CD4-positive, alpha-beta memory T cell (primary cell): ENCODE measurements at regions of chr4 and their contacts with region 1.

Region 1: GRCh38 chr4:147866532-147867271 is 134.8 kb downstream of the ARHGAP10 start:
- DNase-seq: peak; percentile 83 to 89 (median 85)
- H3K4me3 ChIP-seq: no peak overlapping the region
- H3K4me3 Mint-ChIP-seq: no peak overlapping the region
- H3K27ac ChIP-seq: no peak overlapping the region
- H3K27ac Mint-ChIP-seq: peak overlapping the region in 1 of 7 donors; percentile 43
- H3K4me1 ChIP-seq: no peaks in the 10 kb centered on the region
- H3K4me1 Mint-ChIP-seq: peaks cover 0 to 2% (median 0%) of the 10 kb centered on the region in 4 donors
- H3K27me3 ChIP-seq: no peaks in the 10 kb centered on the region
- H3K27me3 Mint-ChIP-seq: no peaks in the 10 kb centered on the region

Region 2: GRCh38 chr4:147160908-147161513 is 705.7 kb before region 1 on chr4:
- CTCF ChIA-PET with region 1: interaction called, 7 read pairs
- POLR2A ChIA-PET with region 1: no interaction called
- intact Hi-C with region 1: loop called (anchors 2 kb)
- DNase-seq: peak in 2 of 5 donors; percentile 3 to 8
- H3K4me3 ChIP-seq: no peak overlapping the region
- H3K4me3 Mint-ChIP-seq: no peak overlapping the region
- H3K27ac ChIP-seq: no peak overlapping the region
- H3K27ac Mint-ChIP-seq: no peak overlapping the region
- H3K4me1 ChIP-seq: no peaks in the 10 kb centered on the region
- H3K4me1 Mint-ChIP-seq: peaks cover 0 to 4% (median under 1%) of the 10 kb centered on the region in 4 donors
- H3K27me3 ChIP-seq: no peaks in the 10 kb centered on the region
- H3K27me3 Mint-ChIP-seq: peaks cover 12 to 16% of the 10 kb centered on the region in 2 donors

Region 3: DNA sequence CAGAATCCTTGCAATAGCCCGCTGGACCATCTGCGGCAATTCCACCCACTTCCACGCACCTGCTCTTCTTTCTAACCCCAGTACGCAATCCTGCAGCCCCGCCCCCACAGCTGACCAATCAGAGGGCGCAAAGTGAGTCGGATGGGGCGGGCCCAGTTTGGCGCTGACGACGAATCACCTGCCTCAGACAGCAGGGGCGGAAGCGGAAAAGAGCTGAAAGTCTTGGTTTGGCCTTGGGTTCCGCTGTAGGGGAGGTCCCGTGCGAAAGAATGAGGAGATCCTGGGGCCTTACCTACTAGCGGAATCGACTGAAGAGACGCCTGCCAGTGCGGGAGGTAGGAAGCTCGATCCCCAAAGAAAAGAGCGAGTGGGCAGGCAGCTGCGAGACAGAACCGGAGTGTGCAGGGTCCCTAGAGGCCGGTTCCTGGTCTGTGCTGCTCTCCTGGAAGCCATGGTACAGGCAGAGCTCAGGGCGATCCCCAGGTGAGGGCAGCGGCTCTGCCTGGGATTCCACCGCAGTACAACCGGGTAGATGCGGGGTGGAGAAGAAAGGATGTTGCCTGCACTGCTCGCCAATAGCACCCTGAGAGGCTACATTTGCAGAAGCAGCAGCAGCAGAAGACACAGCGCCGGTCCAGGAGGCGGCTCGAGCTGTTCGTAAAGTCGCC is 249.4 kb before region 1 on chr4 and contains the start of gene TMEM184C:
- CTCF ChIA-PET with region 1: interaction called, 20 read pairs
- POLR2A ChIA-PET with region 1: interaction called, 3 read pairs
- intact Hi-C with region 1: no loop called
- DNase-seq: peak; percentile 97 to 98 (median 98)
- H3K4me3 ChIP-seq: peak within 1 kb of the TSS; percentile 82 to 99
- H3K4me3 Mint-ChIP-seq: peak within 1 kb of the TSS; percentile 92 to 98 (median 96)
- H3K27ac ChIP-seq: peak within 1 kb of the TSS; percentile 93
- H3K27ac Mint-ChIP-seq: peak within 1 kb of the TSS; percentile 96 to 99 (median 97)
- H3K4me1 ChIP-seq: peaks cover 49% of the 10 kb centered on the region
- H3K4me1 Mint-ChIP-seq: peaks cover 22 to 51% (median 36%) of the 10 kb centered on the region in 4 donors
- H3K27me3 ChIP-seq: no peaks in the 10 kb centered on the region
- H3K27me3 Mint-ChIP-seq: peaks cover 0 to 1% of the 10 kb centered on the region in 2 donors
- total RNA-seq, gene TMEM184C: 28.8 to 31.5 TPM

Region 4: DNA sequence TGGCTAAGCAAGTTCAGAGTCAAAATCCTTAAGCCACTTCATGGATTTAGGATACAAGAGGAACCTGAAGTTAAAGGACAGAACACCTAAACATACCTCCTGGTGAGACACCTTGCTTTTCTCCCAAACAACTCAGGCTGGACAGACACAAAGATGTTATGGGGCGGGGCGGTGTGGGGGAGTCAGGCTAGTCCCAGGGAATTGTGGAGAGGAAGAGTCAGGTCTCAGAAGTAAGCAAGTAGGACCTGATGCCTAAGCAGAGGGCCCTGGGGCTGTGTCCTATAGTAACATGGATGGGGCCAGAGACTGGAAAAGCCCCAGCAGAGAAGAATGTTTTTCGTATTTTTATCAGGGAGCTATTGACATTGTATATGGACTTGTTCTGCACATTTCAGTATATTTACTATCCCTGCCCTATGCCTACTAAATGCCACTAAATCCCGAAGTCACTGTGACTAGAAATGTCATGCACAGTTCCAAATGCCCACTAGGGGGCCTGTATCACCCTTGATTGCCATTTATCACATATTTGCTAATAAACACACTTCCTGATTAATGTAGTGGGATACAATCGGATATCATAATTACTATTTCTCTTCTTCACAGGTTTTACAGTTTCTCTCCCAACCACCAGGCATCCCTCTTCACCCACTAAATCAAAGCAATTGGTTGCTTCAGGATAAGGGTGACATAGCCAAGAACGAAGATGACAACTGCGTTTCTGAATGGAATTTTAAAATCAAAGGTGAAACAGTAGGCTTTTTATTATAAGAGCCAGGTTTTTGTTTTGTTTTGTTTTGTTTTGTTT is 158.6 kb before region 1 on chr4:
- CTCF ChIA-PET with region 1: interaction called, 261 read pairs
- POLR2A ChIA-PET with region 1: interaction called, 4 read pairs
- intact Hi-C with region 1: loop called (anchors 1 kb)
- DNase-seq: peak; percentile 51 to 62 (median 55)
- H3K4me3 ChIP-seq: no peak overlapping the region
- H3K4me3 Mint-ChIP-seq: no peak overlapping the region
- H3K27ac ChIP-seq: no peak overlapping the region
- H3K27ac Mint-ChIP-seq: peak overlapping the region in 1 of 7 donors; percentile 7
- H3K4me1 ChIP-seq: no peaks in the 10 kb centered on the region
- H3K4me1 Mint-ChIP-seq: peaks cover 0 to 3% (median under 1%) of the 10 kb centered on the region in 4 donors
- H3K27me3 ChIP-seq: no peaks in the 10 kb centered on the region
- H3K27me3 Mint-ChIP-seq: no peaks in the 10 kb centered on the region

Region 5: GRCh38 chr4:147731580-147732517 is 134.9 kb before region 1 on chr4 and contains the start of gene ARHGAP10:
- CTCF ChIA-PET with region 1: interaction called, 48 read pairs
- POLR2A ChIA-PET with region 1: interaction called, 13 read pairs
- intact Hi-C with region 1: loop called (anchors 1 kb)
- DNase-seq: peak; percentile 57 to 79 (median 65)
- H3K4me3 ChIP-seq: peak within 1 kb of the TSS; percentile 76 to 84
- H3K4me3 Mint-ChIP-seq: peak within 1 kb of the TSS; percentile 90 to 97 (median 93)
- H3K27ac ChIP-seq: peak within 1 kb of the TSS; percentile 57
- H3K27ac Mint-ChIP-seq: peak within 1 kb of the TSS; percentile 91 to 97 (median 94)
- H3K4me1 ChIP-seq: peaks cover 26% of the 10 kb centered on the region
- H3K4me1 Mint-ChIP-seq: peaks cover 30 to 47% (median 42%) of the 10 kb centered on the region in 4 donors
- H3K27me3 ChIP-seq: no peaks in the 10 kb centered on the region
- H3K27me3 Mint-ChIP-seq: no peaks in the 10 kb centered on the region
- total RNA-seq, gene ARHGAP10: 8.2 to 8.3 TPM

Region 6: GRCh38 chr4:147822128-147822527 is 44.6 kb before region 1 on chr4:
- CTCF ChIA-PET with region 1: interaction called, 13 read pairs
- POLR2A ChIA-PET with region 1: no interaction called
- intact Hi-C with region 1: no loop called
- DNase-seq: no peak
- H3K4me3 ChIP-seq: no peak overlapping the region
- H3K4me3 Mint-ChIP-seq: no peak overlapping the region
- H3K27ac ChIP-seq: no peak overlapping the region
- H3K27ac Mint-ChIP-seq: peak overlapping the region in 1 of 7 donors; percentile 27
- H3K4me1 ChIP-seq: no peaks in the 10 kb centered on the region
- H3K4me1 Mint-ChIP-seq: peaks cover 0 to 4% (median under 1%) of the 10 kb centered on the region in 4 donors
- H3K27me3 ChIP-seq: no peaks in the 10 kb centered on the region
- H3K27me3 Mint-ChIP-seq: no peaks in the 10 kb centered on the region

Region 7: GRCh38 chr4:147879676-147880075 is 13.0 kb after region 1 on chr4:
- CTCF ChIA-PET with region 1: interaction called, 63 read pairs
- POLR2A ChIA-PET with region 1: no interaction called
- intact Hi-C with region 1: no loop called
- DNase-seq: no peak
- H3K4me3 ChIP-seq: no peak overlapping the region
- H3K4me3 Mint-ChIP-seq: no peak overlapping the region
- H3K27ac ChIP-seq: no peak overlapping the region
- H3K27ac Mint-ChIP-seq: no peak overlapping the region
- H3K4me1 ChIP-seq: no peaks in the 10 kb centered on the region
- H3K4me1 Mint-ChIP-seq: peaks cover 0 to 1% (median 0%) of the 10 kb centered on the region in 4 donors
- H3K27me3 ChIP-seq: no peaks in the 10 kb centered on the region
- H3K27me3 Mint-ChIP-seq: no peaks in the 10 kb centered on the region

Region 8: GRCh38 chr4:148300877-148301276 is 434.2 kb after region 1 on chr4:
- CTCF ChIA-PET with region 1: no interaction called
- POLR2A ChIA-PET with region 1: no interaction called
- intact Hi-C with region 1: no loop called
- DNase-seq: no peak
- H3K4me3 ChIP-seq: no peak overlapping the region
- H3K4me3 Mint-ChIP-seq: no peak overlapping the region
- H3K27ac ChIP-seq: no peak overlapping the region
- H3K27ac Mint-ChIP-seq: peak overlapping the region in 1 of 7 donors; percentile 42
- H3K4me1 ChIP-seq: no peaks in the 10 kb centered on the region
- H3K4me1 Mint-ChIP-seq: peaks cover 0 to 20% (median 11%) of the 10 kb centered on the region in 4 donors
- H3K27me3 ChIP-seq: no peaks in the 10 kb centered on the region
- H3K27me3 Mint-ChIP-seq: no peaks in the 10 kb centered on the region